Activated naive CD4-positive, alpha-beta T cell treated with anti-CD3 and anti-CD28 coated beads, Interleukin-2, amount 10 ng/mL, durations not matched to agents 7 days and 5 days (primary cell): ENCODE measurements at regions of chr11 and their contacts with region 1.

Region 1: DNA sequence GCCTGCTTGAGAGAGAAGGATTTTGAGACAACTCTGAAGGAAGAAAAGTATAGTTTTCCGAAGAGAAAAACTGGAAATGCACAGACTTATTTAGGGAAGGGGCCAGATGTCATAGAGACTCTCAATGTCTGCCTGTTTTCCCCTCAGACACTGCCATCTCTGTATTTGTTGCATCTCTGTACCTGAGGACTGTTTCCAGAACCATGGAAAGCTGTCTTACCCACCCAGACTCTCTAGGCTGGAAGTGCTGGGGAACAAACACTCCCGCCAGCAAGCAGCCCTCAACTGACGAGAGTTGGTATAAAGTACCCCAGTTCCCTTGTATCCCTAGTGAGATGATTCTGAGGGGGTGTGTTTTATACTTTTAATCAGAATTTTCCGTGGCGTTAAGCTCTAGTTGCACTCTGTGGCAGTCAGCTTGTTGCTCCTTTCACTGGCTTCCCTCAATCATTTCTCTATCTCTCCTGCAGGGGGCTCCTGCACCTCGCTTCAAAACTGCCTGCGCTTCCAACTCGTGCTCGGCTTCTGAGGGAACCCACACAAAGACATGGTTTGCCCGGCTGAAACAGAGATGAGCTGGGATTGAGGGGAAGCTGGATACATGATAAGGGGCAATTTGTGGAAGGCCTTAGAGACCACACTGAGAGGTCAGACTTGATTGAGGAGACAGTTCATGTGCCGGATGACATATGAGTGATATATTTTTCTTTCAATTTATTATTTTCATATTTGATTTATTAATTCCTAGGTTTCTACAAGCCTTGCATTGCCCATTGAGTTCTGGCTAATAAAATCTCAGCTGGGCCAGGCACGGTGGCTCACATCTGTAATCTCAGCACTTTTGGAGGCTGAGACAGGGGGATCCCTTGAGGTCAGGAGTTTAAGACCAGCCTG is 36.9 kb upstream of the CLPB start:
- DNase-seq: peak; percentile 70
- H3K4me3 Mint-ChIP-seq: no peak overlapping the region
- H3K27ac Mint-ChIP-seq: no peak overlapping the region
- H3K4me1 Mint-ChIP-seq: peaks cover 3% of the 10 kb centered on the region
- H3K27me3 Mint-ChIP-seq: peaks cover 56% of the 10 kb centered on the region

Region 2: DNA sequence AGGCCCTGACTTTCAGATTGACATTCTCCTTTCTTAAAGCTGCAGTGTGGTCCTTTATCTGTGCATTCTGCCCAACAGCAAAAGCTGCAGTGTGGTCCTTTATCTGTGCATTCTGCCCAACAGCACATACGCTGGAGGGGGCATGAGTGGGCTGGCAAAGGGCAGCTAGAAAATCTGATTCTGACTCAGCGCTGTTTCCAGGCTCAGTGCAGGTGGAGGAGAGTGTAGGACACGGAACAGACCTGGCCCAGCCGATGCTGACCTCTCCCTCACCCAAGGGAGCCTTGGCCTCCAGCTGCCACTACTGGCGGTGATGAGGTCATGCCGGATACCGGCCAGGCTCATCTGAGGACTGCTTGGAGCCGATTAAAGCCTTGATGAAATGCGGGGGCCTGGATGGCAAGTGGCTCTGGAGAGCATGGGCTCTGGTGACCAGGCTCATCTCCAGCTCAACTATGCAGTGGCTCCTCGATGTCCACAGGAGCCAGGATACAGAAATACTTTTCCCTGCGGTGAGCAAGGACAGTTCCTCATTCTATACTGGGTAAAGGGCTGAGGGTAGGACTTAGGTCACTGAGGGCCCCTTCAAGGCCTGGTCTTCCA is 121.5 kb before region 1 on chr11:
- CTCF ChIA-PET with region 1: no interaction called
- DNase-seq: no peak
- H3K4me3 Mint-ChIP-seq: no peak overlapping the region
- H3K27ac Mint-ChIP-seq: no peak overlapping the region
- H3K4me1 Mint-ChIP-seq: no peaks in the 10 kb centered on the region
- H3K27me3 Mint-ChIP-seq: no peaks in the 10 kb centered on the region

Region 3: GRCh38 chr11:72396041-72396440 is 75.2 kb before region 1 on chr11:
- CTCF ChIA-PET with region 1: no interaction called
- DNase-seq: no peak
- H3K4me3 Mint-ChIP-seq: no peak overlapping the region
- H3K27ac Mint-ChIP-seq: no peak overlapping the region
- H3K4me1 Mint-ChIP-seq: no peaks in the 10 kb centered on the region
- H3K27me3 Mint-ChIP-seq: no peaks in the 10 kb centered on the region

Region 4: GRCh38 chr11:72406540-72407527 is 64.4 kb before region 1 on chr11:
- CTCF ChIA-PET with region 1: no interaction called
- DNase-seq: no peak
- H3K4me3 Mint-ChIP-seq: no peak overlapping the region
- H3K27ac Mint-ChIP-seq: no peak overlapping the region
- H3K4me1 Mint-ChIP-seq: peaks cover 7% of the 10 kb centered on the region
- H3K27me3 Mint-ChIP-seq: no peaks in the 10 kb centered on the region

Region 5: GRCh38 chr11:72460091-72460647 is 11.1 kb before region 1 on chr11:
- CTCF ChIA-PET with region 1: interaction called, 10 read pairs
- DNase-seq: no peak
- H3K4me3 Mint-ChIP-seq: no peak overlapping the region
- H3K27ac Mint-ChIP-seq: no peak overlapping the region
- H3K4me1 Mint-ChIP-seq: no peaks in the 10 kb centered on the region
- H3K27me3 Mint-ChIP-seq: peaks cover 61% of the 10 kb centered on the region

Region 6: GRCh38 chr11:72553706-72554105 is 82.5 kb after region 1 on chr11:
- CTCF ChIA-PET with region 1: interaction called, 44 read pairs
- DNase-seq: peak; percentile 61
- H3K4me3 Mint-ChIP-seq: no peak overlapping the region
- H3K27ac Mint-ChIP-seq: no peak overlapping the region
- H3K4me1 Mint-ChIP-seq: peaks cover 9% of the 10 kb centered on the region
- H3K27me3 Mint-ChIP-seq: peaks cover 33% of the 10 kb centered on the region

Region 7: DNA sequence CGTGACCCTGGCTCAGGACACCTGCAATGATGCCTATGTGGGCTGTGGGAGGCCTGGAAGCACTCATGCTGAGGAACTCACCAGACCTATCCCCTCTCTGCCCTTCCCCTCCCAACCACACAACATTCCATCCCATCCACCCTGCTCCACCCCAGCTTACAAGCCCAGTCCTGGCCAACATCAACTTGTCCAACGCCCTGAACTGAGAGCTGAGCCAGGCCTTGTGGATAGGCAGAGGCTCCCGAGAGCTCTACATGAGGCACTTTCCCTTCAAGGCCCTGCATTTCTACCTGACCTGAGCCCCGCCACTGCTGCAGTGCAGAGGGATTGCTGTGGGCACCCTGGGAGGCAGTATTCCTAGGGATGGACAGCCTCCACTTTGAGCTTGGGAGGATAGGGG is 90.6 kb after region 1 on chr11:
- CTCF ChIA-PET with region 1: interaction called, 10 read pairs
- DNase-seq: no peak
- H3K4me3 Mint-ChIP-seq: no peak overlapping the region
- H3K27ac Mint-ChIP-seq: no peak overlapping the region
- H3K4me1 Mint-ChIP-seq: no peaks in the 10 kb centered on the region
- H3K27me3 Mint-ChIP-seq: peaks cover 7% of the 10 kb centered on the region

Region 8: DNA sequence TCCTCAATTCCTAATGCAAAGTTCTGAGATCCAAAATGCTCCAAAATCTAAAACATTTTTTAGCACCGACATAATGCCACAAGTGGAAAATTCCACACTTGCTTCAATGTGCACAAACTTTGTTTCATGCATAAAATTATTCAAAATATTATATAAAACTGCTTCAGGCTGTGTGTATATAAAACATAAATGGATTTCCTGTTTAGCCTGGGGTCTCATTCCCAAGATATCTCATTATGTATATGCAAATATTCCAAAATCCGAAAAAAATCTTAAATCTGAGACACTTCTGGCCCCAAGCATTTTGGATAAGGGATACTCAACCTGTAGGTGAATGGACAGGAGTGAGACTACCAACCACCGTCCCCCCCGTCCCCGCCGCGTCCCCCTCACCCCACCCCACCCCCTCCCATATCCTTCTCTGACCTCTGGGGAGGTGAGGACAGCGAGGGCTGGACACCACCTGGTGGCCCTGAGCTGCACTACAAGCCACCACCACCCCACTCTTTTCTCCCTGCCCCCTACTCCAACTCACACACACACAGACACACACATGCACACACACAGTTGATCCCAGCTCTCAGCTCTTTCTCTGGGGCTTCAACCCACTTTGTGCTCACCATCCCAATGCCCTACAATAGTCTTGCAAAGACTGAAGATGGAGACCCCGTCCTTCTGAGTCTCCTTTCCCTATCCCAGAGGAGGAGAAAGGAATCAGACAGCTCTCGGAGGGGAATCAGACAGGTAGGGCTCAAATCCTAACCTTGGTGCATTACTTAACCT is 102.0 kb after region 1 on chr11:
- CTCF ChIA-PET with region 1: interaction called, 26 read pairs
- DNase-seq: peak; percentile 45
- H3K4me3 Mint-ChIP-seq: no peak overlapping the region
- H3K27ac Mint-ChIP-seq: no peak overlapping the region
- H3K4me1 Mint-ChIP-seq: peaks cover 21% of the 10 kb centered on the region
- H3K27me3 Mint-ChIP-seq: peaks cover 48% of the 10 kb centered on the region

Region 9: GRCh38 chr11:72642884-72643511 is 171.7 kb after region 1 on chr11:
- CTCF ChIA-PET with region 1: interaction called, 10 read pairs
- DNase-seq: peak; percentile 71
- H3K4me3 Mint-ChIP-seq: peak overlapping the region; percentile 55
- H3K27ac Mint-ChIP-seq: no peak overlapping the region
- H3K4me1 Mint-ChIP-seq: peaks cover 5% of the 10 kb centered on the region
- H3K27me3 Mint-ChIP-seq: peaks cover 13% of the 10 kb centered on the region

Region 10: GRCh38 chr11:72668611-72669347 is 197.5 kb after region 1 on chr11:
- CTCF ChIA-PET with region 1: no interaction called
- DNase-seq: peak; percentile 48
- H3K4me3 Mint-ChIP-seq: no peak overlapping the region
- H3K27ac Mint-ChIP-seq: no peak overlapping the region
- H3K4me1 Mint-ChIP-seq: peaks cover 3% of the 10 kb centered on the region
- H3K27me3 Mint-ChIP-seq: peaks cover 80% of the 10 kb centered on the region

Region 11: GRCh38 chr11:72683782-72684200 is 212.5 kb after region 1 on chr11:
- CTCF ChIA-PET with region 1: interaction called, 25 read pairs
- DNase-seq: peak; percentile 77
- H3K4me3 Mint-ChIP-seq: no peak overlapping the region
- H3K27ac Mint-ChIP-seq: peak overlapping the region; percentile 21
- H3K4me1 Mint-ChIP-seq: peaks cover 45% of the 10 kb centered on the region
- H3K27me3 Mint-ChIP-seq: peaks cover 21% of the 10 kb centered on the region